Naive thymus-derived CD4-positive, alpha-beta T cell (primary cell): ENCODE measurements at regions of chr13 and their contacts with region 1.

Region 1: GRCh38 chr13:79837741-79838450 is 356.9 kb downstream of the NDFIP2 start:
- DNase-seq: no peak
- ATAC-seq: no peak
- H3K4me3 ChIP-seq: no peak overlapping the region
- H3K4me3 Mint-ChIP-seq: no peak overlapping the region
- H3K27ac ChIP-seq: no peak overlapping the region
- H3K27ac Mint-ChIP-seq: no peak overlapping the region
- H3K4me1 ChIP-seq: no peaks in the 10 kb centered on the region
- H3K4me1 Mint-ChIP-seq: no peaks in the 10 kb centered on the region
- H3K27me3 ChIP-seq: no peaks in the 10 kb centered on the region
- H3K27me3 Mint-ChIP-seq: no peaks in the 10 kb centered on the region

Region 2: GRCh38 chr13:79096099-79096498 is 741.8 kb before region 1 on chr13:
- CTCF ChIA-PET with region 1: no interaction called
- POLR2A ChIA-PET with region 1: no interaction called
- intact Hi-C with region 1: no loop called
- DNase-seq: no peak
- ATAC-seq: no peak
- H3K4me3 ChIP-seq: no peak overlapping the region
- H3K4me3 Mint-ChIP-seq: no peak overlapping the region
- H3K27ac ChIP-seq: no peak overlapping the region
- H3K27ac Mint-ChIP-seq: no peak overlapping the region
- H3K4me1 ChIP-seq: no peaks in the 10 kb centered on the region
- H3K4me1 Mint-ChIP-seq: peaks cover 0 to 2% (median 0%) of the 10 kb centered on the region in 7 donors
- H3K27me3 ChIP-seq: no peaks in the 10 kb centered on the region
- H3K27me3 Mint-ChIP-seq: peaks cover 0 to 23% (median 5%) of the 10 kb centered on the region in 5 donors

Region 3: GRCh38 chr13:79853258-79853657 is 15.4 kb after region 1 on chr13:
- CTCF ChIA-PET with region 1: no interaction called
- POLR2A ChIA-PET with region 1: no interaction called
- intact Hi-C with region 1: loop called in 1 of 2 experiments (anchors 2 kb)
- DNase-seq: no peak
- ATAC-seq: no peak
- H3K4me3 ChIP-seq: no peak overlapping the region
- H3K4me3 Mint-ChIP-seq: no peak overlapping the region
- H3K27ac ChIP-seq: no peak overlapping the region
- H3K27ac Mint-ChIP-seq: no peak overlapping the region
- H3K4me1 ChIP-seq: no peaks in the 10 kb centered on the region
- H3K4me1 Mint-ChIP-seq: no peaks in the 10 kb centered on the region
- H3K27me3 ChIP-seq: no peaks in the 10 kb centered on the region
- H3K27me3 Mint-ChIP-seq: peaks cover 0 to 4% (median 0%) of the 10 kb centered on the region in 5 donors